Activated CD8-positive, alpha-beta memory T cell treated with anti-CD3 and anti-CD28 coated beads, Interleukin-2, amount 10 ng/mL, durations not matched to agents 7 days and 5 days (primary cell): ENCODE measurements at regions of chr17 and their contacts with region 1.

Region 1: GRCh38 chr17:79393358-79394202 is 217.3 kb downstream of the RBFOX3 start:
- DNase-seq: peak; percentile 68
- ATAC-seq: peak; percentile 66
- H3K4me3 Mint-ChIP-seq: no peak overlapping the region
- H3K27ac Mint-ChIP-seq: no peak overlapping the region
- H3K4me1 Mint-ChIP-seq: no peaks in the 10 kb centered on the region
- H3K27me3 Mint-ChIP-seq: peaks cover 28% of the 10 kb centered on the region

Region 2: GRCh38 chr17:79045842-79046196 is 347.8 kb before region 1 on chr17:
- CTCF ChIA-PET with region 1: interaction called, 28 read pairs
- DNase-seq: peak; percentile 71
- ATAC-seq: peak; percentile 80
- H3K4me3 Mint-ChIP-seq: no peak overlapping the region
- H3K27ac Mint-ChIP-seq: no peak overlapping the region
- H3K4me1 Mint-ChIP-seq: no peaks in the 10 kb centered on the region
- H3K27me3 Mint-ChIP-seq: no peaks in the 10 kb centered on the region

Region 3: DNA sequence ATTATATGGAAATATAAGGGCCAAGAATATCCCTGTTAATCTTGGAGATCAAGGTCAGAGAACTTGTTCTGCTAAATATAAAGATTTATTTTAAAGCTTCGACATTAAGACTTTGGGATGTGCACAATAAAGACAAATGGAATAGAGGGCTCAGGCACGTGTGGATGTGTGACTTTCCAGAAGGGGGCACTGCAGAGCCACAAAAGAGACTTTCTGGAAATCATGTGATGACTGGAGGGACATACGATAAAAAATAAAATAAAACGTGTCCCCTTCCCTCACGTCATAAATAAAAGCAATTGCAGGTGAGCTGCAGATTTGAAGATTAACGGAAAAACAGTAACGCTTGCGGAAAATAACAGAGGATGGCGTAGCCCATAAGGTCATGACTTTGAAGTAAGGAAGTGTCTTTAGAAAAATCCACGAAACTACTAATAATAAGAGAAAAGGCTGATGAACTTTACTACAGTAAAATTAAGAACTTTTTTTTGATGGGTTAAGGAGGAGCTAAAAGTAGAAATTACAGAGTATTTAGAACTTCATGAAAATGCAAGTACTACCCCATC is 328.4 kb before region 1 on chr17:
- CTCF ChIA-PET with region 1: interaction called, 11 read pairs
- DNase-seq: peak; percentile 66
- ATAC-seq: no peak
- H3K4me3 Mint-ChIP-seq: no peak overlapping the region
- H3K27ac Mint-ChIP-seq: no peak overlapping the region
- H3K4me1 Mint-ChIP-seq: peaks cover 2% of the 10 kb centered on the region
- H3K27me3 Mint-ChIP-seq: peaks cover 3% of the 10 kb centered on the region

Region 4: DNA sequence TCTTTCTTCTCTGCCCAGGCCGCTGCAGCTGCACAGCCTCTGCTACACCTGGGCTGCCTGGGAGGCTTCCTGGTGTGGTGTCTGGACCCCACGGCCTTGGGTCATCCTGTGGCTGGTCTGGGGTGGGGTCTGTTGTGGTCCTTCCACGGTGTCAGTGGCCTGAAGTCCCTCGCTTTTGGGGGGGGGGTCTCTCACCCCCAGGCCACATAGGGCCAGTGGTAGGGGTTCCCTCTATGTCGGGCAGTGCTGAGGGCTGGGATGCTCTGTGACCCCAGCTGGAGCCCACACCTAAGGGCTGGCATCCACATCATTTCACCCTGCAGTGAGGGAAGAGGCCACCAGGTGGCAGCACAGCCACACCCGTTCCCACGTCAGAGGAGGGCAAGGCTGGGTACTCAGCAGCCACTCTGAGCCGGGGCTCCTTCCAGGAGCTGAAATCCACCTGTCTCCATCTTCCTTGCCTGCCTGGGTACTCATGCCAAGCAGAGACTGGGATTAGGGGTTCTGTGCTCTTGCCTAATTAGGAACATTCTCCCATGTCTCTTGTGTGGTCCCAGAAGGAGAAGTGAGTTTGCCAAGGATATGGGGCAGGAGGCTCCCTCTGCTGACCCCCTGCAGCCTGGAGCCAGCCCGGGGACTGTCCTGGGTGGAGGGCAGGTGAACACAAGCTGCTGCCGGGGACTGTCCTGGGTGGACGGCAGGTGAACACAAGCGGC is 306.0 kb before region 1 on chr17:
- CTCF ChIA-PET with region 1: interaction called, 96 read pairs
- DNase-seq: peak; percentile 78
- ATAC-seq: peak; percentile 82
- H3K4me3 Mint-ChIP-seq: no peak overlapping the region
- H3K27ac Mint-ChIP-seq: no peak overlapping the region
- H3K4me1 Mint-ChIP-seq: peaks cover 2% of the 10 kb centered on the region
- H3K27me3 Mint-ChIP-seq: no peaks in the 10 kb centered on the region

Region 5: DNA sequence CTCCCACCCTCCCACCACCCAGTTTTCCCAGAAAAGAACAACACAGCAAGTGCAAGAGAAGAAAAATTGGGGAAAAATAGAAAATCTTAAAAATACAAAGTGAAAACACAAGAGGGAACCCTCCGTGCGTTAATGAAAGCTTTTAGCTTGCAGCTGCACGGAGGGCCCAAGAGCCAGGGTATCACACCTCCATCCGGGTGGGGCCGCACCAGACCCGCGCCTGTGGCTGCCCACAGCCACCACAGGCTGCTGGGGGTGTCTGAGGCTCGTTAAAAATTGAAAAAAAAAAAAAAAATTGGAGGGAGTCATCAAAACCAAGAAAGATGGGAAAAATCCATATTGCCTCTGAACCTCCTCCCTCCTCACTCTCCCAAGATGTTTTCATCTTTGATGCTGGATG is 300.3 kb before region 1 on chr17:
- CTCF ChIA-PET with region 1: interaction called, 96 read pairs
- DNase-seq: no peak
- ATAC-seq: no peak
- H3K4me3 Mint-ChIP-seq: no peak overlapping the region
- H3K27ac Mint-ChIP-seq: no peak overlapping the region
- H3K4me1 Mint-ChIP-seq: peaks cover 8% of the 10 kb centered on the region
- H3K27me3 Mint-ChIP-seq: peaks cover 17% of the 10 kb centered on the region

Region 6: DNA sequence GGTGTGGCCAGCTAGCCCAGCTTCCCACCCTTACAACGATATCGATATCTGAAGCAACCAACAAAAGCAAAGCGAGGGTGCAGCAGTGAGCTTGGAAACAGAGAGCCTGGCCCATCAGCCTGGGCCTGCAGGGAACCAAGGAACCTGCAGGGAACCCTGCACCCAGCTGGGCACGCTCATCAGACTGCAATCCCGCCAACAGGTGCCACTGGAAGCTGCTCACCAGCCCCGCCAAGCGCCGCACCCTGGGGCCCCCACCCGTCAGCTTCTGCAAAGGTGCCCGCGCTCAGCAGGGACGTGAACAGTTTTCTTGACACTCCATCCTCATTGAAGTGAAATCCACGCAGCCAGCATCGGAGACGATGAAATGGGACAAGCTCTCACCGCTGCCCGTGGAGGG is 33.4 kb before region 1 on chr17:
- CTCF ChIA-PET with region 1: interaction called, 13 read pairs
- DNase-seq: no peak
- ATAC-seq: no peak
- H3K4me3 Mint-ChIP-seq: no peak overlapping the region
- H3K27ac Mint-ChIP-seq: no peak overlapping the region
- H3K4me1 Mint-ChIP-seq: no peaks in the 10 kb centered on the region
- H3K27me3 Mint-ChIP-seq: no peaks in the 10 kb centered on the region